CD4-positive, alpha-beta T cell (primary cell): ENCODE measurements at regions of chr3 and their contacts with region 1.

Region 1: DNA sequence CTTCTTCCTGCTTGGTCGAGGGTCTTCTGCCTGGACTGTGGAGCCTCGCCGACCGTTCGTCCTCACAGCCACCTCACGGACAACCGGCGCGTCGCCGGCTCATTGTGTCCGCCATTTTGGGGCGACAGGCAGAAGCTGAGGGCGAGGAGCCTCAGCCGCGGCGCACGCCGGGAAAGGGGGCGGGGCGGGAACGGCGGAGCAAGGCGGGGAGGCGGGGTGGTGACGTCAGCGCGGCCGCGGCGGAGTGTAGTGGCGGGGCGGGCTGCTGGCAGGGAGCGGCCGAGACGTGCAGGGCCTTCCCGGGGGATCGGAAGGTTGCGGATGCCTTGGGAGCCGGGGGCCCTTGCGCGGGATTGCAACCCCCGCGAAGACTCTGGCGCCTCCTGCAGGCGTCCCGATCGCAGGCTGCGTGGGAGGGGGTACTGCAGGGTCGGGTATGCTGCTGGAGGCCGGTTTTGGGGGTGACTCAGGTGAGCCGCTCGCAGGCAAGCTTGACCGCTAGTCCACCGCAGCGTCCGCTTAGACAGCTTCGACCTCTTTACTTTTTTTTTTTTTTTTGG is at the start of gene WDR82:
- DNase-seq: peak in 13 of 14 experiments; percentile 94 to 99 (median 98)
- ATAC-seq: peak; percentile 77
- H3K4me3 ChIP-seq: peak within 1 kb of the TSS; percentile 98
- H3K4me3 Mint-ChIP-seq: peak within 1 kb of the TSS; percentile 98
- H3K27ac ChIP-seq: peak within 1 kb of the TSS; percentile 92 to 94
- H3K27ac Mint-ChIP-seq: peak within 1 kb of the TSS; percentile 92
- H3K4me1 ChIP-seq: peaks cover 61% of the 10 kb centered on the region
- H3K4me1 Mint-ChIP-seq: peaks cover 74% of the 10 kb centered on the region
- H3K27me3 ChIP-seq: no peaks in the 10 kb centered on the region
- H3K27me3 Mint-ChIP-seq: no peaks in the 10 kb centered on the region
- CTCF ChIP-seq: peak; percentile 47
- total RNA-seq, gene WDR82: 114 TPM

Region 2: DNA sequence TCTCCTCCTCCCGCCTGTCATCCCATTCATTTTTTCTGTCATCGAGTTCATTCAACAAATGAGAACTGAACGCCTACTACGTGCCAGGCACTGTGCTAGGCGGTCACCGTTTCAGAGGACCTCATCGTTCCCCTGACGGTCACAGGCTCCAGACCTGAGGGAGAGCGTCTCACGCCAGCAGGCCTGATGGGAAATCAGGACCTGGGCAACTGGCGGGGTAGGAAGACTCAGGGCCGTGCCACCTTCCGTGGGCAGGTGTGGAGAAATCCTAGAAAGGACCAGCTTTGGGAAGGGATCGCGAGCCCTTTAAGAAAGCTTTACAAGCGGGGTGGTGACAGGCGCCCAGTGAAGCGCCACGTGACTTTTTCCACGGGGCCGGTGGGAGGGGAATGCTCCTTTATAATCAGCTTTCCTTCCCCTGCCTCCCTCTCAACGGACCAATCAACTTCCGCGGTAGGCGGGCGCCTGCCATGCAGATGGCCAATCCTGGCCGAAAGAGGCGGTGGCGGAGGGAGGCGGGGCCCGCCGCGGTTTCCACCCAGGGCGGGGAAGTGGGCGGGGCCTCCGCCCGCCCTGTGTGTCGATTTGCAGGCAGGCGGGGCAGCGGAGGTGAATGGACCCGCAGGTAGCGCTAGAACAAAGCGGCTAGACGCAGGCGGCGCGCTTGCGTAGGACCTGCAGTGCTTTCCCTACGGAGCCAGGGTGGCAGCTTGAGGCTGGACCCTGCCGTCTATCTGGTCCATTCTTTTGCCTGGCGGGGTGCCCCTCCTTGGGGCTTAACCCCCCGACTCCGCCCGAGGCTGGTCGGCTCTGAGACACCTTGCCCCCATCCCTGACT is 221.4 kb before region 1 on chr3:
- CTCF ChIA-PET with region 1: no interaction called
- POLR2A ChIA-PET with region 1: interaction called, 10 read pairs
- intact Hi-C with region 1: no loop called
- DNase-seq: peak; percentile 99 to 100 (median 99)
- ATAC-seq: peak; percentile 83
- H3K4me3 ChIP-seq: peak overlapping the region; percentile 68
- H3K4me3 Mint-ChIP-seq: peak overlapping the region; percentile 94
- H3K27ac ChIP-seq: peak overlapping the region; percentile 76 to 88
- H3K27ac Mint-ChIP-seq: peak overlapping the region; percentile 98
- H3K4me1 ChIP-seq: peaks cover 45% of the 10 kb centered on the region
- H3K4me1 Mint-ChIP-seq: peaks cover 38% of the 10 kb centered on the region
- H3K27me3 ChIP-seq: no peaks in the 10 kb centered on the region
- H3K27me3 Mint-ChIP-seq: no peaks in the 10 kb centered on the region
- CTCF ChIP-seq: no peak

Region 3: DNA sequence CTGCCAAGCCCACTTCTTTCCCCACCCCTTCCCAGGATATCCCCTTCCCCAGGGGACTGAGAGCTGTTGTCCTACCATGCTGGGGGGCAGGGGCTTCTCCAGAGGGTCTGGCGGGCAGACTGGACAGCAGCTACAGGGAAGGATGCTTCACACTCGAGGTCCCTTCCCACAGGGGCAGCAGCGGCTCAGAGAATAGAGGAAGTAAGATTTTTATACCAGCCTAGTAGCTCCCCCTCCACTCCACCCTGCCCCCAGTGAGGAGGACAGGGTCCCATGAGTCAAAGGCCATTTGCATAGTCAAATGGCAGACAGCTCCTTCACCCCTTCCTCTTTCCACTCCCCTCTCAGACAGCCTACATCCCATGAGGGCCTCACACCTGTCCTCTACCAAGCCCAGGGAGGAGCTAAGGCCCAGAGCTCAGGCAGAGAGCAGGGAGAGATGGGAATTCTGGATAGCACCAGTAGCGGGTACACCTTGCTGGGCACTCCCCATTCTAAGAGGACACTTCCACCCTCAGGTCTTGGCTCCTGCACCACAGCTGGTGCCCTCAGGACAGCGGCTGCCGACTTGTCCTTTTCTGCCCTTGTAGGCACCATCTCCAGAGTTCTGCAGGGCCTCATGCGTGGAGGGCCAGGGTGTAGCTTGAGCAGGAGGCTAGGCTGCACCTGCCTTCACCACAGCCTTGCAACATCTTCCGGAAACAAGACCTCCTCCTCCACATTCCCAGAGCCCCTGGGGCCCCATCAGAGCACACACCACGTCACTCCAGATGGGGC is 53.0 kb before region 1 on chr3 and contains the start of gene TLR9:
- CTCF ChIA-PET with region 1: interaction called, 5 read pairs
- POLR2A ChIA-PET with region 1: interaction called, 64 read pairs
- intact Hi-C with region 1: no loop called
- DNase-seq: peak in 5 of 14 experiments; percentile 33 to 62 (median 44)
- ATAC-seq: peak; percentile 59
- H3K4me3 ChIP-seq: no peak within 1 kb of the TSS
- H3K4me3 Mint-ChIP-seq: peak within 1 kb of the TSS; percentile 73
- H3K27ac ChIP-seq: peak within 1 kb of the TSS; percentile 51 to 64
- H3K27ac Mint-ChIP-seq: peak within 1 kb of the TSS; percentile 90
- H3K4me1 ChIP-seq: peaks cover 76% of the 10 kb centered on the region
- H3K4me1 Mint-ChIP-seq: peaks cover 68% of the 10 kb centered on the region
- H3K27me3 ChIP-seq: no peaks in the 10 kb centered on the region
- H3K27me3 Mint-ChIP-seq: no peaks in the 10 kb centered on the region
- CTCF ChIP-seq: no peak
- total RNA-seq, gene TLR9: 0.08 to 0.17 TPM

Region 4: DNA sequence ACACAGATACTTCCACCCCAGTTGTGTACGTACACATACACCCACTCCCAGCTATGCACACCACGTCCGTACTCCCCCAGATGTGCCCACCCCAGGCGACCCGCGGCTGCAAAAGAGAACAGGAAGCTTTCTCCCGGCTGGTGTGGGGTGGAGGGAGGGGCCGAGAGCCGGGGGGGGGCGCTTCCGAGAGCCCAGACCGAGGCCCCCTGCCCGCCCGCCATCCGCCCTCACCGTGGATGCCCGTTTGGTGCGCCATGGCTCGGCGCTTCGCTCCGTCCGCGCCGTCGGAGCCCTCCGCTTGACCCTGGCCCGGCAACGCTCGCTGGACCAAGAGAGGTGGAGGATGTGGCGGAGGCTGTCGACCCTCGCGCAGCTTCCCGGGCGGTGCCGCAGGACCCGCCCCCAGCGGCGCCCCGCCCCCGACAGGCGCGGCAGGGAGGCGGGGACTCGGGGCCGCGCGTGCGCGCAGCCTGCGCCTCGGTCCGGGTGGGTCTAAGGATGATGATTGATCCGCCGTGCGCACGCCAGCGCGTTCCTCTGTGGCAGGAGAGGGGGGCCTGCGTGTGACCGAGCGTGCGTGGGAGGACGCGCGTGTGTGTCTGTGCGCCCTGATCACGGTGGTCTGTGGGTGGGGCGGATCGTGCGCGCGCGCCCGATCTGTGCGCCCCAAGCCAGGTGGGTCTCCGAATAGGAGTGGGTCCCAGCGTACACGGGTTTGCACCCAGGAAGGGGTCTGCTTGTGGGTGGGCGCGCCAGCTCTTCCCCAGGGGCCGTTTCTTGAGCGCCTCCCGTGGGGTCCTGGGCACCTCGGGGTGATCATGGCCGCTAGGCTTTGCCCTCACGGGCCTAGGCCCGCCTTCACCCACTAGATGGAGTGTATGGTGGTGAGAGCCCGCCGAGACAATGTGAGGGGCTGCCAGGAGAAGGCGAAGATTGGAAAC is 39.6 kb before region 1 on chr3 and contains the start of gene TWF2:
- CTCF ChIA-PET with region 1: interaction called, 62 read pairs
- POLR2A ChIA-PET with region 1: interaction called, 538 read pairs
- intact Hi-C with region 1: loop called (anchors 1 kb)
- DNase-seq: peak; percentile 69 to 93 (median 84)
- ATAC-seq: peak; percentile 79
- H3K4me3 ChIP-seq: peak within 1 kb of the TSS; percentile 99
- H3K4me3 Mint-ChIP-seq: peak within 1 kb of the TSS; percentile 99
- H3K27ac ChIP-seq: peak within 1 kb of the TSS; percentile 81 to 95
- H3K27ac Mint-ChIP-seq: peak within 1 kb of the TSS; percentile 99
- H3K4me1 ChIP-seq: peaks cover 80% of the 10 kb centered on the region
- H3K4me1 Mint-ChIP-seq: peaks cover 86% of the 10 kb centered on the region
- H3K27me3 ChIP-seq: no peaks in the 10 kb centered on the region
- H3K27me3 Mint-ChIP-seq: no peaks in the 10 kb centered on the region
- CTCF ChIP-seq: peak; percentile 63
- total RNA-seq, gene TWF2: 17.4 to 21.7 TPM

Region 5: DNA sequence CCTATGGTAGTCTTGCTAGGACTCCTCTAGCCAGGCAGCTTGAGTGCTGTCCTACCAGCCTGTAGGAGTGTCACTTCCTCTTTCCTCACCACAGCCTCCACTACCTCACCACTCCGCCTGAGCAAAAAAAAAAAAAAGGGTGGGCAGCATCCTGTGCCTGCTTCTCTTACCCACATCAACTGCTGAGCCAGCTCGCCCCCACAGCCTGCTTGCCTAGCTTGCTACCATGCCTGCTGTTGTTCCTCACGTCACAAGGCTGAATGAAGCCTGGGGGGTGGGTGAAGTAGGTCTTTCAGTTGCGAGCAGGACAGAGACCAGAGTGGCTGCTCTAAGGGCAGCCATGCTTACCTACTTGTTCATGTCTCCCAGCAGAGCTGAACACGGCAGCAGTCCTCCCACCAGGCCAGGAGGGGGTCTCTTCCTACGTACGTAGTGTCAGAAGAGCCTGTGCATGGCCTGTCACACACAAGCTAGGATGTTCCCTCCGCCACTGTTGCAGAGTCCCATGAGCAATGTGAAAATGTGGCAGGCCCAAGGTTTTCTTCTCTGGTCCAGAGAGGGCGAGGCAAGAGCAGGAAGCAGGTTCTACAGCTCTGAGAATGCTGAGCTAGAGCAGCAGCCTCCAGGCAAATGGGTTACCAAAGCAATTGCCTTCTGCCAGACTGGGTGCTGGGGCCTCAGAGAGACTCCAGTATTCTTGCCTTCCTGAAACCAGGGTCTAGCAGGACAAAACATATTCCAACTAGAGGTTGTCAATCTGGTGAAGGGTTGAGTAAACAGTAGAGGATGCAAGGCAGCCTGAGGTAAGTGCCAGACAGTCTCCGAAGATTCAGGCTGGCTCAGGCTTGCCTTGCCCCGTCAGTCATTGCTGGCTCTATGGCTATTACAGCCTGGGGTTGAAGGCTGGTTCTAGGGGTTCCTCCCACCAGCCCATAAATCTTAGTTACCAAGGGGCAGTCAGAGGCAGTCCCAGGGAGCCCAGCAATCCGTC is 25.0 kb before region 1 on chr3:
- CTCF ChIA-PET with region 1: interaction called, 31 read pairs
- POLR2A ChIA-PET with region 1: interaction called, 538 read pairs
- intact Hi-C with region 1: loop called in 1 of 2 experiments (anchors 1 kb)
- DNase-seq: peak; percentile 73 to 95 (median 82)
- ATAC-seq: peak; percentile 83
- H3K4me3 ChIP-seq: peak overlapping the region; percentile 30
- H3K4me3 Mint-ChIP-seq: peak overlapping the region; percentile 89
- H3K27ac ChIP-seq: peak overlapping the region; percentile 82 to 89
- H3K27ac Mint-ChIP-seq: peak overlapping the region; percentile 95
- H3K4me1 ChIP-seq: peaks cover 100% of the 10 kb centered on the region
- H3K4me1 Mint-ChIP-seq: peaks cover 93% of the 10 kb centered on the region
- H3K27me3 ChIP-seq: no peaks in the 10 kb centered on the region
- H3K27me3 Mint-ChIP-seq: no peaks in the 10 kb centered on the region
- CTCF ChIP-seq: no peak

Region 6: GRCh38 chr3:52291508-52292181 is 13.1 kb after region 1 on chr3:
- CTCF ChIA-PET with region 1: interaction called, 16 read pairs
- POLR2A ChIA-PET with region 1: interaction called, 94 read pairs
- intact Hi-C with region 1: no loop called
- DNase-seq: peak in 12 of 14 experiments; percentile 19 to 66 (median 44)
- ATAC-seq: no peak
- H3K4me3 ChIP-seq: no peak overlapping the region
- H3K4me3 Mint-ChIP-seq: peak overlapping the region; percentile 80
- H3K27ac ChIP-seq: no peak overlapping the region
- H3K27ac Mint-ChIP-seq: peak overlapping the region; percentile 80
- H3K4me1 ChIP-seq: peaks cover 46% of the 10 kb centered on the region
- H3K4me1 Mint-ChIP-seq: peaks cover 38% of the 10 kb centered on the region
- H3K27me3 ChIP-seq: no peaks in the 10 kb centered on the region
- H3K27me3 Mint-ChIP-seq: no peaks in the 10 kb centered on the region
- CTCF ChIP-seq: peak; percentile 53

Region 7: DNA sequence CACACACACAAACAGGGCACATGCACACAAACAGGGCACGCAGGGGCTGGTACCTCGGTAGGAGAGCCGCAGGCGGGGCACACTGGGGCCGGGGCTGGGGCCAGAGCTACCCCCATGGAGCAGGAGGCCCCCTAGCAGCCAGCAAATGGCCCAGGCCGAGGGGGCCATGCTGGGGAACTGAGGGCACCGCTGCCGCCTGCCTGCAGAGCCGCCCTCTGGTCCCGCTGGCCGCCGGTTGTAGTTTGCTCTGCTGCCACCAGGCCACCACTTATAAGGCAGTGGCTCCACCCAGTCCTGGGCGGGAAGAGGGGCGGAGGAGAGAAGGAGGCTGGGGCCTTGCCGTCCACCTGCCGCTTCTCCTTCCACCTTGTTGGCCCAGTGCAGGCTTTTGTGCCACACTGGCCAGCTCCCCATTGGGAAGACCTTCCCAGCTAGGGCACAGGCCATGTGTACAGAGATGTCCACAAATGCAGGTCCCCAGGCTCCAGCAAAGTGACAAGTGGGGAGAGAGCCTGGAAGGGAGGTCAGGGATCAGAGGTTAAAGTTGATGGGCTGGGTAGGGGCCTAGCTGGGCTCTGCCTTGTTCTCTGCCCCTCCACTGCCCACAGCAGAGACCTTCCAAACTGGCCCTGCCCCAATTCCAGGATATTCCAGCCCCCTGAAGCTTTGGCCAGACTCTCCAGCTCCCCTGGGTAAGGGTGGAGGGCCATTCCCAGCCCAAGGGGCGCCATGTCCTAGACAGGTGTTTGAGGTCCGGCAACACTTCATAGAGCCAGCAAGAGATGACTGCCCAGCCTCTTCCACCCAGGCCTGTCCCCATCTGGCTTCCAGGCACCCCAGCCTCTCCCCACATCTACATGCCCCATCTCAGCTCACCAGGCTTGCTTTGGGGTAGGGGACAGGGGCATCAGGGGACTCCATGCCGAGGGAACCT is 166.5 kb after region 1 on chr3 and contains the start of gene SEMA3G:
- CTCF ChIA-PET with region 1: no interaction called
- POLR2A ChIA-PET with region 1: no interaction called
- intact Hi-C with region 1: loop called in 1 of 2 experiments (anchors 10 kb)
- DNase-seq: peak; percentile 55 to 86 (median 70)
- ATAC-seq: peak; percentile 96
- H3K4me3 ChIP-seq: peak within 1 kb of the TSS; percentile 29
- H3K4me3 Mint-ChIP-seq: no peak within 1 kb of the TSS
- H3K27ac ChIP-seq: no peak within 1 kb of the TSS
- H3K27ac Mint-ChIP-seq: no peak within 1 kb of the TSS
- H3K4me1 ChIP-seq: peaks cover 28% of the 10 kb centered on the region
- H3K4me1 Mint-ChIP-seq: peaks cover 14% of the 10 kb centered on the region
- H3K27me3 ChIP-seq: no peaks in the 10 kb centered on the region
- H3K27me3 Mint-ChIP-seq: no peaks in the 10 kb centered on the region
- CTCF ChIP-seq: peak; percentile 32
- total RNA-seq, gene SEMA3G: 0.34 to 0.69 TPM